CD8-positive, alpha-beta T cell (primary cell): ENCODE measurements at regions of chr5 and their contacts with region 1.

Region 1: GRCh38 chr5:140764177-140765020 is 21.5 kb upstream of the PCDHA1 start:
- DNase-seq: no peak
- ATAC-seq: no peak
- H3K4me3 ChIP-seq: no peak overlapping the region
- H3K4me3 Mint-ChIP-seq: no peak overlapping the region
- H3K27ac ChIP-seq: no peak overlapping the region
- H3K27ac Mint-ChIP-seq: no peak overlapping the region
- H3K4me1 ChIP-seq: no peaks in the 10 kb centered on the region
- H3K4me1 Mint-ChIP-seq: no peaks in the 10 kb centered on the region
- H3K27me3 ChIP-seq: no peaks in the 10 kb centered on the region
- H3K27me3 Mint-ChIP-seq: no peaks in the 10 kb centered on the region
- CTCF ChIP-seq: no peak

Region 2: DNA sequence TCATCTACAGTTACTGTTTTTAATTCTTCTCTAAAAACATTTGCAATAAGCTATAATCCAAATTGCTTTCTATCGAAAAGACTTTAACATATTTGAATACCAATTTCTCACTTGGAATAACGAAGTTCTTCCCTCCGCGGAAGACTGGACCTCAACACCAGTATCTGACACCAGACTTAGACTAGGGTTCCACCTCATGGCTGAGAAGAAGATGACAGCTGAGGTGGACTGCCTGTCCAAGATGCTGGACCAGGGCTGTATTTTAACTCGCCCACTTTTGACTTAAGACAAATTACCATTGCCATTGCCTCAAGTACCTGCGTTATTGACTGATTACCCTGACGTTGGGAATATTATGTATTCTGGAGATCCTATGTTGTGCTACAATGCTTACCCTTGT is 30.0 kb before region 1 on chr5:
- CTCF ChIA-PET with region 1: no interaction called
- POLR2A ChIA-PET with region 1: no interaction called
- intact Hi-C with region 1: no loop called
- DNase-seq: no peak
- ATAC-seq: no peak
- H3K4me3 ChIP-seq: no peak overlapping the region
- H3K4me3 Mint-ChIP-seq: no peak overlapping the region
- H3K27ac ChIP-seq: no peak overlapping the region
- H3K27ac Mint-ChIP-seq: no peak overlapping the region
- H3K4me1 ChIP-seq: no peaks in the 10 kb centered on the region
- H3K4me1 Mint-ChIP-seq: no peaks in the 10 kb centered on the region
- H3K27me3 ChIP-seq: peaks cover 0 to 4% of the 10 kb centered on the region in 2 experiments
- H3K27me3 Mint-ChIP-seq: peaks cover 43% of the 10 kb centered on the region
- CTCF ChIP-seq: no peak

Region 3: DNA sequence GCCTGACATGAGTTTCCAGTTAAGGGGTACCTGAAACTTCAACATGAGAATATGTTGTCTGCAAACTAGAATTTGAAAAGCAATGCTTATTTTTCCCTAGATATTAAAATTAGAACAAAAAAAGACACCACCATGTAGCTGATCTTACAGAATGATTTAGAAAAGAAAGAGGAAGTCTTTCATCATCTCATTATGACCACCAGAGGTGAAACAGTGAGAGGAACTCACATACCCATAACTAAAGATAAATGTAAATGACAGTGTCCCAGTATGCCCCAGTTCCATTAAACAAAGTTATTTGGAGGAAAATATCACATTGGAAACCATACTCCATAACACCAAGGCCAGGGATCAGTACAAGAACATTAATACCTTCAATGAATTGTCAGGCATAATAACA is 549.3 kb after region 1 on chr5:
- CTCF ChIA-PET with region 1: no interaction called
- POLR2A ChIA-PET with region 1: no interaction called
- intact Hi-C with region 1: loop called in 1 of 2 experiments (anchors 10 kb)
- DNase-seq: no peak
- ATAC-seq: no peak
- H3K4me3 ChIP-seq: no peak overlapping the region
- H3K4me3 Mint-ChIP-seq: no peak overlapping the region
- H3K27ac ChIP-seq: no peak overlapping the region
- H3K27ac Mint-ChIP-seq: no peak overlapping the region
- H3K4me1 ChIP-seq: no peaks in the 10 kb centered on the region
- H3K4me1 Mint-ChIP-seq: peaks cover 6% of the 10 kb centered on the region
- H3K27me3 ChIP-seq: no peaks in the 10 kb centered on the region
- H3K27me3 Mint-ChIP-seq: no peaks in the 10 kb centered on the region
- CTCF ChIP-seq: no peak